ENCODE measurements at regions of chr20 and their contacts with region 1.

Region 1: GRCh38 chr20:16729565-16730456 is at the start of gene SNRPB2:
- DNase-seq: peak; percentile 96
- total RNA-seq, gene SNRPB2: 27.7 TPM

Region 2: DNA sequence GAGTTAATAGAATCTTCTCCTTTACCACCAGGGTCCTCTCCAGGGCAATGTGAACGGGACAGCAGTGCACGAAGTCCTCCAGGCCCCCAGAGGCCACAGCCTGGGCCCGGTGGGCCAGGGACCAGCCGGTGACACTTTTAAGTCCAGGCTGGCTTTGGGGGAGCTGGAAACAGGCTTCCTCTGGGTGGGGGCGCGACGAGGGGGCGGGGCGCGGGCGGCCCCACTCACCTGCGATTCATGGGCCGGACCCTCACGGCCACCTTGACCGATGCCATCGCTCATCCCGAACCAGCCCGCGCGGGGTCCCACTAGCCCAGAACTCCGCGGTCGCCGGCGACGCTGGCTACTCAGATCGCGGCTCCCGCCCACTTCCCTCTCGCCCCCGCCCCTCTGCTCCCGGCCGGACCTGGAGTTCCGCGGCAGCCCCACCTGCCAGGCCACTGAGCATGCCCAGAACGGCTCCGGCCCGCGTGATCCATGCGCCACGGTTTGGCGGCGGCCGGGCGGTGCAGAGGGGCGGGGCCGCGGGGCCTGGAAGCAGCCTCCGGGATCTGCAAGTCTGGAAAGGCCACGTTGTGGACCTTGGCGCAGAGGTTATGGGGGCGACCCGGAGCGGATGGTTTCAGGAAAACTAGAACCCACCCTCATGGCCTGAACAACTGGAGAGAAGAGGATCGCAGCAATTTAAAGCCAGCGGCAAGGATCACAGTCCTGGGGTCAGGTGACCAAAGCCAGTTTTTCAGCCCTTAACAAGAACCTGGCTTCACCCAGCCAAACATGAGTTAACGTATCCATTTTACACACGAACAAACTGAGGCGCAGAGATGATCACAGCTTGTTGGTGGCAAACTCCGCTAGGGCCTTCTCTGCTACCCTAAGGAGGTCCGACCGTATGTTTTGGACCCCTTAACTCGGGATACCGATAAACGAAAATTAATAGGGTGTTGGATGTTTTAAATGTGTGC is 156.5 kb before region 1 on chr20 and contains the start of gene KIF16B:
- intact Hi-C with region 1: loop called (anchors 5 kb)
- DNase-seq: peak; percentile 95
- total RNA-seq, gene KIF16B: 19.7 TPM

Region 3: DNA sequence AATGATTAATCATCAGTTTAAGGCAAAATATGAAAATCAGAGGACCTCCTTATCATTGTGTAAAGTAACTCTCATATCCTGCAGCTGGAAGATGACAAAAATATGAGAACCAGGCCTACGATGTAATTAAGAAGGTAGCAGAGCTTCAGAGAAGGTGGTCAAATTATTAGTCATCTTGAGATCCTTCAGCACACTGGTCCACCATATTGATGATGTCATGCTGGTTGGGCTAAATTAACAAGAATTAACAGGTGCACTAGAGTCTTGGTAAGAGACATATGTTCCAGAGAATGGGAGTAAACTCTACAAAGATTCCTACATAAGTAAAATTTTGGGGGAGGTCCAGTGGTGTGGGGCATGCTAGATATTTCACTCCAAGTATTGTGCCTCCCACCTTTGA is 131.1 kb after region 1 on chr20:
- intact Hi-C with region 1: no loop called
- DNase-seq: no peak

Region 4: GRCh38 chr20:17210983-17211382 is 481.2 kb after region 1 on chr20:
- intact Hi-C with region 1: no loop called
- DNase-seq: no peak